ENCODE measurements at regions of chr18 and their contacts with region 1.

Region 1: GRCh38 chr18:27599202-27599829 is 414.2 kb upstream of the CHST9 start:
- DNase-seq: no peak
- H3K4me3 ChIP-seq: no peak overlapping the region
- H3K27ac ChIP-seq: no peak overlapping the region
- H3K4me1 ChIP-seq: peaks cover 5% of the 10 kb centered on the region
- H3K27me3 ChIP-seq: no peaks in the 10 kb centered on the region
- CTCF ChIP-seq: peak; percentile 90

Region 2: DNA sequence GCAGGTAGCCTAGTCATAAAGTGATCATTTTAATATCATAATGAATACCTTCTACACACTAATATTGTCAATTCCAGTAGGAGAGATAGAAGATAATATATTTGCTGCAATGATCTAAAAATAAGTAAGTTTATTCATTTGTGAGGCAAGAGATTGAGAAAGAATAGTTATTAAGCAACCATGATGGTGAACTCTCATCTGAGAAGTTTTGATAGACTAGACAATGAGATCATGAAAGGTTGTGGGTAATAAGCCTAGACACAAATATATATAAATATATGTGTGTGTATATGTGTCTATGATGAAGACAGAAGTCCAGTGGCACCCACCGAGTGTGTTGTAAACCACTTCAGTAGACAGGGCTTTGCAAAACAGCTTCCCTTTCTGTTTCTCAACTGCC is 233.2 kb before region 1 on chr18:
- intact Hi-C with region 1: loop called (anchors 5 kb)
- DNase-seq: no peak
- H3K4me3 ChIP-seq: no peak overlapping the region
- H3K27ac ChIP-seq: no peak overlapping the region
- H3K4me1 ChIP-seq: no peaks in the 10 kb centered on the region
- H3K27me3 ChIP-seq: no peaks in the 10 kb centered on the region
- CTCF ChIP-seq: no peak

Measured in left ventricle myocardium inferior (tissue), 1 donor.